Transverse colon (tissue), 4 donors: ENCODE measurements at regions of chr13 and their contacts with region 1.

Region 1: GRCh38 chr13:29850224-29850898 is at the start of gene UBL3:
- DNase-seq: peak; percentile 98
- H3K4me3 ChIP-seq: peak within 1 kb of the TSS; percentile 73 to 91 (median 82)
- H3K27ac ChIP-seq: peak within 1 kb of the TSS; percentile 96 to 99 (median 98)
- H3K4me1 ChIP-seq: peaks cover 6 to 23% (median 13%) of the 10 kb centered on the region in 4 donors
- H3K27me3 ChIP-seq: no peaks in the 10 kb centered on the region
- CTCF ChIP-seq: no peak
- EP300 ChIP-seq: no peak
- POLR2A ChIP-seq: peak; percentile 97
- total RNA-seq, gene UBL3: 8.8 to 77.1 (median 60.0) TPM

Region 2: DNA sequence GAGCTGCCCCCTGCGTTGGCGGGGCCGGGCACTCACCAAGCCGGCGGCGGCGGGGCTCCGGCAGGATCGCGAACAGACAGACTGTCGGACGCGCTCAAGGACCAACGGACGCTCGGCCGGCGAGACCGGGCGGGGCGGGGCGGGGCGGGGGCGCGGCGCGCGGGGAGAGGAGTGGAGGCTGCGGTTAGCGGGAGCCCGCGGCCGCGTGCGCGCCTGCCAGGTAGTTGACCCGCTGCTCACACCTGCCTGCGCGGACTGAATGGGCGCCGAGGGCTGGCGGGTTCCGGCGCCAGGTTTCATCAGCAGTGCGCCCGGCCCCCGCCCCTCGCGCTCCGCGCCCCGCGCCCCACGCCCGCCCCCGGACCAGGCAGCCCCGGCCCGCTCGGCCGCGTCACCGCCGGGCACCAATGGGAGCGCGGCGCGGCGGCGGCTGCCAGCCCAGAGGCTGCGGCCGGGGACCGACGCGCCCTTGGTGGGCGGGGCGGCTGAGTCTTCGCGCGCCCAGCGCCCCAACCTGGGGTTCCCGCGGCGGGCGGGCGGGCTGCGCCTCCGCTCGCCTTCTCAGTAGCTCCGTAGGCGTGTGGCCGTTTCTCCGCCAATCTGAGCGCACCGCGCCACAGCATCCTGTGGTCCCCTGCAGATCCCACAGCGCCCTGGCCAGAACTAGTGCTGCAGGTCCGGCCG is 254.8 kb before region 1 on chr13 and contains the start of gene SLC7A1:
- in situ Hi-C with region 1: no loop called
- intact Hi-C with region 1: loop called (anchors 10 kb)
- DNase-seq: peak; percentile 85
- H3K4me3 ChIP-seq: peak within 1 kb of the TSS; percentile 83 to 98 (median 94)
- H3K27ac ChIP-seq: peak within 1 kb of the TSS; percentile 91 to 97 (median 95)
- H3K4me1 ChIP-seq: peaks cover 3 to 19% (median 11%) of the 10 kb centered on the region in 4 donors
- H3K27me3 ChIP-seq: no peaks in the 10 kb centered on the region
- CTCF ChIP-seq: no peak
- EP300 ChIP-seq: no peak
- POLR2A ChIP-seq: no peak
- total RNA-seq, gene SLC7A1: 10.8 to 21.4 (median 17.9) TPM

Region 3: GRCh38 chr13:29743201-29743786 is 107.1 kb before region 1 on chr13:
- in situ Hi-C with region 1: no loop called
- intact Hi-C with region 1: loop called (anchors 10 kb)
- DNase-seq: peak; percentile 26
- H3K4me3 ChIP-seq: no peak overlapping the region
- H3K27ac ChIP-seq: peak overlapping the region; percentile 50 to 83 (median 64)
- H3K4me1 ChIP-seq: peaks cover 0 to 30% (median 9%) of the 10 kb centered on the region in 4 donors
- H3K27me3 ChIP-seq: no peaks in the 10 kb centered on the region
- CTCF ChIP-seq: no peak
- EP300 ChIP-seq: no peak
- POLR2A ChIP-seq: no peak

Region 4: DNA sequence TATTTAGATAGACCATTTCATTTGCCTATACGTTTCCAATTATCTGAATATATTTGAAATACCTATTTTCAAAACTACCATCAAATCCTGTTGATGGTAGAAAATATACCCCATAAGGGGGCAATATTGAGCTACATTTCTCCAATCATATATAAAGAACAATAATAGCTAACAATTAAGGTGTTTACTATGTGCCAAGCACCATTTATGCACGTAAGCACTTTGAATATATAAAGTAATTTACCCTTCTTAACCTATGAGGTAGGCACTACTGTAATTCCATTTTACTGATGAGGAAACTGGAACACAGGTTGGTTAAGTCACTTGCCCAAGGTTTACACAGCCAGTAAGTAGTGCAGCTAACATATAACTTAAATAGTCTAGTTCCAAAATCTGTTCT is 79.1 kb before region 1 on chr13:
- in situ Hi-C with region 1: loop called in 1 of 4 experiments (anchors 10 kb)
- intact Hi-C with region 1: no loop called
- DNase-seq: no peak
- H3K4me3 ChIP-seq: no peak overlapping the region
- H3K27ac ChIP-seq: no peak overlapping the region
- H3K4me1 ChIP-seq: peaks cover 0 to 5% (median 0%) of the 10 kb centered on the region in 4 donors
- H3K27me3 ChIP-seq: no peaks in the 10 kb centered on the region
- CTCF ChIP-seq: peak; percentile 40 to 62 (median 45)
- EP300 ChIP-seq: no peak
- POLR2A ChIP-seq: no peak